ENCODE measurements at regions of chr1 and their contacts with region 1.

Region 1: DNA sequence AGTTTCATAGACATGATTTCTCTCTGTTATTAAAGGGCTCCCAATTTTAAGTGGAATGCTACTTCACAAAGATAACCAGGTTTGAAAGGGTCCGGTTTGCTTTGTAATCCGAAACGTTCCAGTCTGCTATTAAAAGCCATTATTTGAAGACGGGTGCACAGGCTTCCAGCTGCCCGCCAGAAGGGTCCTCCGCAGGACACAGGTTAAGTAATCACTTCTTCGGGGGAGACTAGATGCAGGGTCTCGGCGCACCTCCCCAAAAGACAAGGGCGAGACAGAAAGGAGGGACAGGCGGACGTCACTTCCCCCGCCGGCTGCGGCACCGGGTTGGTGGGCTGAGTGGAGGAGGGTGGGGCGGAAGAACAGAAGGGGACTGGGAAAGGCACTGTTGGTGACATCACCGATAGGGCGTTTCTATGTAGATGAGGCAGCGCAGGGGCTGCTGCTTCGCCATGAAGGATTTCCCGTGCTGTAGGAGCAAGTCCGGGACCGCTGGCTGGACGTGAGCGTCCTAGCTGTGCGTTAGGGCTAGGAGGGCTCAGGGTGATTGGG is 8.9 kb downstream of the RNU1-2 start:
- DNase-seq: peak; percentile 99
- H3K4me3 Mint-ChIP-seq: no peak overlapping the region
- H3K27ac Mint-ChIP-seq: no peak overlapping the region
- H3K4me1 Mint-ChIP-seq: peaks cover 27% of the 10 kb centered on the region
- H3K27me3 Mint-ChIP-seq: peaks cover 6% of the 10 kb centered on the region

Region 2: GRCh38 chr1:16644193-16644481 is 260.5 kb before region 1 on chr1:
- CTCF ChIA-PET with region 1: no interaction called
- POLR2A ChIA-PET with region 1: interaction called, 20 read pairs
- DNase-seq: no peak
- H3K4me3 Mint-ChIP-seq: no peak overlapping the region
- H3K27ac Mint-ChIP-seq: no peak overlapping the region
- H3K4me1 Mint-ChIP-seq: peaks cover 1% of the 10 kb centered on the region
- H3K27me3 Mint-ChIP-seq: peaks cover 8% of the 10 kb centered on the region

Region 3: DNA sequence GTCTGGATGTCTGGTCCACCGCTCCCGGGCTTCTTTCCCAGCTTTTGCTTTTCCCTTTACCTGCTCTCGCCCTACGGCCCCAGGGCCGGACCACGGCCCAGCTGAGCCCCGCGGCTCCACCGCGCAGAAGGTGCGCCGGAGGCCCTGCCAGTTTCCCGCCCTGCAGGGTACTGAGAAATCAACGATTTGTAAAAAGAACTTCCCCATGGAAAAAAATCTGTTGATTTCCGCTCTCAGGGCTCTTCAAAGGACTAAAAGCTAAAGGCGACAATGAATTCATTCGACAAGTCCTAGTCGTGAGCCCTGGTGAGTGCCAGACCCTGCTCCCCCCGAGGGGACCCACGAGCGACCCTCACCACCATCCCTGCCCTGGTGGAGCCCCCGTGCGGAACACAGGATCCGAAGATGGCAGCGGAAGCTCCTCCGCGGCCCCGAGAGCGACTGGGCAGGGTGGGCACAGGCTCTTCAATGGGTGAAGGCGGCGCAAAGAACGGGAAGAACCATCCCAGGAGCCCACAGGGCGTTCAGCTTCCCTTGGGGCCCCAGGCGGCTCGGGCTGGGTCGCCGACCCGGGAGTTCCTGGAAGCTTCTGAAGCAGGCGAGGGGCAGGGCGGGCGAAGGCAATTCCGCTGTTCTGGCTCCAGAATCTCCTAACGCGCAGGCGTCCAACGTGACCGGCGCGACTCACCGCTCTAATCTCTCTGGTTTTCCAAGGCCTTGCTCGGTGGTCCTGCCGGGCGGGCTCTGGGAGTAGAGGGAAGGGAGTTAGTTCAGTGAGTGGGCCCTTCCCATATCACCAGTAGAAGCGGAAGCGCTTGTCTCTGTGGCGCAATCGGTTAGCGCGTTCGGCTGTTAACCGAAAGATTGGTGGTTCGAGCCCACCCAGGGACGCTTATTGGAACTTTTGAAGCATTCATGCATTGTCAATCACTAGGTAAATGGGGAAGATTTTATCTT is 15.5 kb before region 1 on chr1:
- CTCF ChIA-PET with region 1: interaction called, 3 read pairs
- POLR2A ChIA-PET with region 1: interaction called, 75 read pairs
- DNase-seq: peak; percentile 46
- H3K4me3 Mint-ChIP-seq: peak overlapping the region; percentile 78
- H3K27ac Mint-ChIP-seq: peak overlapping the region; percentile 25
- H3K4me1 Mint-ChIP-seq: peaks cover 16% of the 10 kb centered on the region
- H3K27me3 Mint-ChIP-seq: peaks cover 76% of the 10 kb centered on the region

Region 4: DNA sequence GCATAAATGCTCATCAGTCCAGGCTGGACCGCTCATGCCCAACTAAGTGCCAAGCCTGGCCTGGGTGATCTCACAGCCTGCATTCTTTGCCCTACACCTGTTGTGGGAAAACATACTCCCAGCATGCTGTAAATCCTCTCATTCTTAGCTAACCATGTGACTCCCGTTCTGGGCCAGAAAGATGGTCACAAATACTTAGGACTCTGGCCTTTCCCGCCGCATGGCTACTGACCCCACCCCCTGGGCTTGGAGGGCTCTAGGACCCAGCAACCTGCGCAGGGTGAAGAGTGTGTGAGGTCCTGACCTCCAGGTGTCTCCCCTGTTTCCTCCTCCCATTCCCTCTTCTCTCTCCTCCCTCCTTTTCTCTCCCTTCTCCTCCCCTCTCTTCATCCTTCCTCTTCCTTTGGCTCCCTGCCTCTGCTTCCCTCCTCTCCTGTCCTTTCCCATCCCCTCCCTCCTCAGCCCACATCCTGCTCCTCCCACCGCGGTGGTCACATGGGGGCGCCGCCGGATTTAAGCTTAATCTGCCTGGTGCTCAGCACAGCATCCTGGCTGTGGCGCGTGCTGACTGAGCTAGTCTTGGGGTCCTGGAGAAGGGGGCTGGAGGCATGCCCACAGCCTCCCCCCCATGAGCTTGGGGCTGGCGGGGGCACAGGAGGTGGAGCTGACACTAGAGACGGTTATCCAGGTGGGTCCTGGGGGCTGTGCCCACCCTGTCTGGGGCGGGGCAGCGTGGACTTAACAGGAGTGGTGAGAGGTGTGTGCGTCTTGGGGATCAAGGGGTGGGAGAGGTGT is 17.0 kb after region 1 on chr1 and contains the start of gene CROCC:
- CTCF ChIA-PET with region 1: no interaction called
- POLR2A ChIA-PET with region 1: interaction called, 35 read pairs
- DNase-seq: peak; percentile 52
- H3K4me3 Mint-ChIP-seq: peak within 1 kb of the TSS; percentile 36
- H3K27ac Mint-ChIP-seq: no peak within 1 kb of the TSS
- H3K4me1 Mint-ChIP-seq: peaks cover 19% of the 10 kb centered on the region
- H3K27me3 Mint-ChIP-seq: peaks cover 3% of the 10 kb centered on the region
- total RNA-seq, gene CROCC: 18.3 to 18.8 TPM

Region 5: GRCh38 chr1:16960560-16961296 is 56.1 kb after region 1 on chr1:
- CTCF ChIA-PET with region 1: interaction called, 3 read pairs
- POLR2A ChIA-PET with region 1: interaction called, 11 read pairs
- DNase-seq: peak; percentile 86
- H3K4me3 Mint-ChIP-seq: peak overlapping the region; percentile 70
- H3K27ac Mint-ChIP-seq: peak overlapping the region; percentile 62
- H3K4me1 Mint-ChIP-seq: peaks cover 13% of the 10 kb centered on the region
- H3K27me3 Mint-ChIP-seq: no peaks in the 10 kb centered on the region

Region 6: DNA sequence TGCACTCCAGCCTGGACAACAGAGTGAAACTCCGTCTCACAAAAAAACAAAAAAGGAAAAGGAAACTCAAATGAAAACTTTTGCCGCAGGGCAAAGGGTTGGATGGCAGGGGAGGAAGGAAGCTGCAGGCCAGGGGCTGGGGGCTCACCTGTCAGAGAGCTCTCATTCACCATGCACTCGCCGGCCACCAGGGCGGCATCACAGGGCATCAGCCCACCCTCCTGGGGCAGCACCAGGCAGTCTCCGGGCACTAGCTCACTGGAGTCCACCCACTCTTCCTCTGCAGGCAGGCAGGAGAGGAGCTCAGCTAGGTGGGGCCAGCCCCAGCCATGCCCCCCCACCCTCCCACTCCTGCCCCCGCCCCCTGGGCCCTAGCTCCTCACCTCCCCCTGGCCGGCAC is 95.2 kb after region 1 on chr1:
- CTCF ChIA-PET with region 1: no interaction called
- POLR2A ChIA-PET with region 1: no interaction called
- DNase-seq: no peak
- H3K4me3 Mint-ChIP-seq: no peak overlapping the region
- H3K27ac Mint-ChIP-seq: no peak overlapping the region
- H3K4me1 Mint-ChIP-seq: no peaks in the 10 kb centered on the region
- H3K27me3 Mint-ChIP-seq: no peaks in the 10 kb centered on the region

Measured in activated CD4-positive, alpha-beta memory T cell treated with anti-CD3 and anti-CD28 coated beads, Interleukin-2, amount 10 ng/mL, durations not matched to agents 7 days and 5 days (primary cell).